Gastrocnemius medialis (tissue), 4 donors: ENCODE measurements at regions of chr6 and their contacts with region 1.

Region 1: DNA sequence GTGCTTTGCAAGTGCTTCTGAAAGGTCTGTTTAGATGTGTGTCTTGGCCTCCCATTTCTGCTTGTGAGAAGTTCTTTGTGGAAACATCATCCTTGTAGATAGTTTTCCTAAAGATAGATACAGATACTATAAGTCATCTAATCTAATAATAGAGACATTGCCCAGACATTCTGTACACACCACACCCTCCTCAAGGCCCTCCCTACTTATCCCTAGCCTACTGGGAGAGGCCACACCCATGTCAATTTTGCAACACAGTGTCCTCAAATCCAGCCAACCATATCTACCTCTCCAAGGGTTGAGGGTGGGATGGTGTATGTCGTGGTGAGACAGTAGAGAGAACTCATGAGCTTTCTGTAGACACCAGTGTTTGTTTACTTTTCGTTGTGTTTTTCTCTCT is 6.2 kb downstream of the KDM1B start:
- DNase-seq: peak; percentile 10 to 69
- ATAC-seq: peak; percentile 95 to 97
- H3K4me3 ChIP-seq: no peak overlapping the region
- H3K27ac ChIP-seq: peak overlapping the region; percentile 55 to 76 (median 62)
- H3K4me1 ChIP-seq: peaks cover 0 to 11% of the 10 kb centered on the region in 2 donors
- H3K27me3 ChIP-seq: no peaks in the 10 kb centered on the region
- CTCF ChIP-seq: no peak
- POLR2A ChIP-seq: no peak

Region 2: GRCh38 chr6:18122124-18123093 is 39.0 kb before region 1 on chr6 and contains the start of gene NHLRC1:
- in situ Hi-C with region 1: no loop called
- intact Hi-C with region 1: no loop called
- DNase-seq: peak; percentile 85 to 90
- ATAC-seq: peak; percentile 97 to 98
- H3K4me3 ChIP-seq: peak within 1 kb of the TSS; percentile 62 to 97 (median 68)
- H3K27ac ChIP-seq: peak within 1 kb of the TSS; percentile 79 to 89 (median 86)
- H3K4me1 ChIP-seq: peaks cover 12 to 20% of the 10 kb centered on the region in 2 donors
- H3K27me3 ChIP-seq: no peaks in the 10 kb centered on the region
- CTCF ChIP-seq: peak; percentile 97 to 99 (median 98)
- POLR2A ChIP-seq: peak; percentile 68
- total RNA-seq, gene NHLRC1: 0.56 to 1.9 (median 1.4) TPM

Region 3: GRCh38 chr6:18216411-18216810 is 55.0 kb after region 1 on chr6:
- in situ Hi-C with region 1: no loop called
- intact Hi-C with region 1: loop called (anchors 5 kb)
- DNase-seq: no peak
- ATAC-seq: no peak
- H3K4me3 ChIP-seq: no peak overlapping the region
- H3K27ac ChIP-seq: no peak overlapping the region
- H3K4me1 ChIP-seq: no peaks in the 10 kb centered on the region
- H3K27me3 ChIP-seq: no peaks in the 10 kb centered on the region
- CTCF ChIP-seq: no peak
- POLR2A ChIP-seq: no peak

Region 4: DNA sequence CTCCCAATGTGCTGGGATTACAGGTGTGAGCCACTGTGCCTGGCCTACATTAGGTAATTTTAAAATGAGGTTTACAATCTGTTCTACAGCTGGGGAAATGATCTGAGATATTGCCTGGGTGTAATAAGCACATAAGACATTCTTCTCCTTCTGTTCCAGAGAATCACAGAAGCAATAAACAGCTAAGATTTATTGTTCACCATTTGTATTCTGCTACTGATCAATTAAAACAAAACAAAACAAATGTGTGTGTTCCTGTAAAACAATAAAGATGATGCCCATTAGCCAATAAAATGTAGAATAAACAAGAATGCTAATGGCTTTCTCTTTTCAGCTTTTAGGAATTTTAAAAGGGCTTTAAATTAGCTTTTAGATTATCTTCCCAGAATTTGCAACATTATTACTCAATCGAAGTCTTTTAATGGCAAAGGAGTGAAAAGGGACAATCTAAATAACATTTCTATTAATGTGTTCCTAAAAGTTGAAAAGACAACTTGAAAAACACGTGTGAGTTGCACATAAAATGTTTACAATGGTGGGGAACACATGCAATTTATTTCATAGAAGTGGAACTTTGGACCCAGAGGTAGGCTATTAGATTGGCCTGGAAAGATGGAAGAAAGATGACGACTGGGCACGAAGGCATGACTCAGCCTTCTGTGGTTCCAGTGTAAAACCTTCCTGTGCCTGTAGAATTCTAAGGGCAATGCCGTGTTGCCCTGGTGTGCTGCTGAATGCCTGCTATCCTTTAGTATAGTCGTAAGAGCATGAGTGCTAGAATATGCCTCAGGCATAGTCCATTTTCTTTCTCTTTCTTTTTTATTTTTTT is 131.9 kb after region 1 on chr6:
- in situ Hi-C with region 1: no loop called
- intact Hi-C with region 1: no loop called
- DNase-seq: no peak
- ATAC-seq: no peak
- H3K4me3 ChIP-seq: no peak overlapping the region
- H3K27ac ChIP-seq: no peak overlapping the region
- H3K4me1 ChIP-seq: peaks cover 0 to 11% of the 10 kb centered on the region in 2 donors
- H3K27me3 ChIP-seq: no peaks in the 10 kb centered on the region
- CTCF ChIP-seq: no peak
- POLR2A ChIP-seq: no peak